Activated CD8-positive, alpha-beta memory T cell treated with anti-CD3 and anti-CD28 coated beads, Interleukin-2, amount 10 ng/mL, durations not matched to agents 7 days and 5 days (primary cell): ENCODE measurements at regions of chr5 and their contacts with region 1.

Region 1: DNA sequence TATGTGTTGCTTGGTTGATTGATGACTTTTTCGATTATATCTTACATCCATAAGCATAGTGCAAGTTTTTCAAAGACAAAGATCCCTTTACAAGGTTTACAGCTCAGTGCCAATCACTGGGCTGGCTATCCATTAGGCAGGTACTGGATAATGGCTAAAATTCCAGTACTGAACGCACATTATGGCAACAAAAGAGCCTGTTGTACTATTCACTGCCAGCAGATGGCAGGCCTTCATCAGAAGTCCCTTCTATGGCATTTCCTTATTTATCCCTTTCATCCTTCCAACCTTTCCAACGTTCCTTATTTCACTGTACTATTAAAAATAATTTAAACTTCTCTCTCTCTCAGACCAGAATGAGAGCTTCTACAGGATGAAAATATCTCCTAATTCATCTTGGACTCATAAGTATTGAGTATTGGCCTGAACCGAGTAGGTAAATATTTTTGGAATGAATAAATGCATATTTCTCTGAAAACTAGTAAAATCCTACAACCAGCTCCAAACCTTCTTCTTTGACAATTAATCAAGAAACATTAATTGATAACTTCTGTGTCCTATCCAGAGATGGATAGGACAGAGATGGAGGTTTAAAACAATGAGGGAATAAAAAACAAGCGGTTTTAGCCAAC is 6.7 kb upstream of the WNT8A start:
- DNase-seq: peak; percentile 61
- ATAC-seq: no peak
- H3K4me3 Mint-ChIP-seq: no peak overlapping the region
- H3K27ac Mint-ChIP-seq: no peak overlapping the region
- H3K4me1 Mint-ChIP-seq: peaks cover 17% of the 10 kb centered on the region
- H3K27me3 Mint-ChIP-seq: peaks cover 11% of the 10 kb centered on the region

Region 2: DNA sequence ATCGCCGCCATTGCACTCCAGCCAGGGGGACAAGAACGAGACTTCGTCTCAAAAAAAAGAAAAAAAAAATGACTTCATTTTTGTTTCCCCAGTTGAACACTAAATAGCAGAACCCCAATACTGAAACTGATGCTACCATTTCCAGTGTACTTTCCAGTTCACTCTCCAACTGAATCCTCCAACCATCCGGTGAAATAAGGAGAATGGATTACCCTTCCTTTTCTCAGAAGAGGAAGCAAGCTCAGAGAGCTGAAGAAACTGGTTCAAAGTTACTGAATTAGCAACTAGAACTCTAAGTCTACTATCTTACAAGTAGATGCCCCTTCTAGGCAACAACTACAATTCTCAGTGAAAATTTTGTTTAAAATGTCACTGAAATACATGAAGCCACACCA is 48.2 kb before region 1 on chr5:
- CTCF ChIA-PET with region 1: interaction called, 10 read pairs
- DNase-seq: no peak
- ATAC-seq: no peak
- H3K4me3 Mint-ChIP-seq: peak overlapping the region; percentile 32
- H3K27ac Mint-ChIP-seq: peak overlapping the region; percentile 64
- H3K4me1 Mint-ChIP-seq: peaks cover 71% of the 10 kb centered on the region
- H3K27me3 Mint-ChIP-seq: no peaks in the 10 kb centered on the region

Region 3: DNA sequence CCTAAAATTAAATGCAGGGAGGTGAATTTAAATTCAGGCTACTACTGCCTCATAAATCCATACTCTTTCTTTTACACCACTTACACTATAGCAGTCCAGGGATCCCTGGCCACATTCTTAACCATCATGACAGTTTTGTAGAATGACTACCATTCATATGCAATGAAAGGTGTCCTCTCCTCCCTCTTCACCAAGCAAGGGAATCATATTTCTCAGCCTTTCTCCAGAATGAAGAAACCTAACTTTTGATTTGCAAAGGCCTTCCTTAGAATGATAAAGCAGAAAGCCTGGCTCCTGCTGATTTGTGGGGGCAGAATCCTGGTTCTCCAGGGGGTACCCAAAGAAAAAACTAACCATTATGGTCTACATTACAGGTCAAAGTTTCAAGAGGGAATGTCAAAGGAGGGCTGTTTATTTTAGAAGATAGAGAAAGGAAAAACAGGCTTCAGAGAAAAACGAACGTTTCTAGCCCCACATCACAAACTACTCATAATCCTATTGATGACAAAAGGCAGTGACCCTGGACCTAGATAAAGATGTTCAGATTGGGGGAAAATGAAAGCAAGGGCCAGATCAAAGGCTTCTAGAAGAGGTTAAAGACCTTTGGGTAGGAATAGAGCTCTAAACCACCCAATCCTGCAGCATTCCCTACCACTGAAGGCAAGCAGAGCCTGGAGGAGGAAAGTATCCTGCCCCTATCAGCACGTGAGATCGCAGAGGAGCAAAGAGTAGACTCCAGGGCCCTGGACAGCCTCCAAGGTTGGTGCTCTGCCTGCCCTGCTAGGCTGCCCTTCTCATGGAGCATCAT is 18.1 kb after region 1 on chr5:
- CTCF ChIA-PET with region 1: interaction called, 13 read pairs
- DNase-seq: no peak
- ATAC-seq: no peak
- H3K4me3 Mint-ChIP-seq: no peak overlapping the region
- H3K27ac Mint-ChIP-seq: no peak overlapping the region
- H3K4me1 Mint-ChIP-seq: peaks cover 27% of the 10 kb centered on the region
- H3K27me3 Mint-ChIP-seq: peaks cover 27% of the 10 kb centered on the region

Region 4: GRCh38 chr5:138128334-138128733 is 51.2 kb after region 1 on chr5:
- CTCF ChIA-PET with region 1: interaction called, 127 read pairs
- DNase-seq: no peak
- ATAC-seq: no peak
- H3K4me3 Mint-ChIP-seq: no peak overlapping the region
- H3K27ac Mint-ChIP-seq: no peak overlapping the region
- H3K4me1 Mint-ChIP-seq: peaks cover 2% of the 10 kb centered on the region
- H3K27me3 Mint-ChIP-seq: peaks cover 33% of the 10 kb centered on the region

Region 5: GRCh38 chr5:138303369-138303768 is 226.2 kb after region 1 on chr5:
- CTCF ChIA-PET with region 1: no interaction called
- DNase-seq: no peak
- ATAC-seq: no peak
- H3K4me3 Mint-ChIP-seq: no peak overlapping the region
- H3K27ac Mint-ChIP-seq: no peak overlapping the region
- H3K4me1 Mint-ChIP-seq: peaks cover 3% of the 10 kb centered on the region
- H3K27me3 Mint-ChIP-seq: no peaks in the 10 kb centered on the region